ENCODE measurements at regions of chr9 and their contacts with region 1.

Region 1: DNA sequence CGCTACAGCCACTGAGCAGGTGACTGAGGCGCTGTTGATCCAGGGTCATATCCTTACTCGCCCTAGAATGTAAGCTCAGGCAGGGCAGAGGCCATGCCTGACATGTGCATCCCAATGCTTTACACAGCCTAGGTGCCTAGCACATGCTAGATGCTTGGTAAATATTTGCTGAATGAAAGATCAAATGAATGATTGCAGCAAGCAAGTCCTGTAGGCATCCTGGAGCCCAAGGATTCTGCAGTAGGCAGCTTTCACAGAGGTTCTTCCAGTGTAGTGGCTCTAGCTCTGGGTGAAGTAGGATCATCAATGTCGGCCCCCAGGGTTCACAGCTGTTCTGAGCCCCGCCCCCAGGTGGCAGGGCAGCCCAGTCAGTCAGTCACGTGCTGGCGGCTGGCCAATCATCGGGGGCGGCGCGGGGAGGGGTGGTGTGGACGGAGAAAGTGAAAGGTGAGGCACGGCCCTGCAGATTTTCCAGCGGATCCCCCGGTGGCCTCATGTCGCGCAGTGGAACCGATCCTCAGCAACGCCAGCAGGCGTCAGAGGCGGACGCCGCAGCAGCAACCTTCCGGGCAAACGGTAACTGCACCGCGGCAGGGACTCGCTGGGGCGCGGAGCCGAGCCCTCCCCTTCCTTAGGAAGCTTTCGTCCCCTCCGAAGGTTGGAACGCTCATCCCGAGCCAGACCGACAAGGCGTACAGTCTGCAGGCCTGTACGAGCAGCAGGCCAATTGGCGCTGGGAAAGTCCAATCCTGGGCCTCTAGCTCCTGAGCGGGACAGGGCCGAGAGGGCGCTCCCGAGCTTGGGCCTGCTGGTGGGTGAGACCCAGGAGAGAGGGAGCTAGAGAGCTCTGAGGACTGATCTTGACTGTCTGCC is at the start of gene GALT:
- DNase-seq: peak; percentile 98
- H3K4me3 Mint-ChIP-seq: peak within 1 kb of the TSS; percentile 87
- H3K27ac Mint-ChIP-seq: peak within 1 kb of the TSS; percentile 88
- H3K4me1 Mint-ChIP-seq: peaks cover 44% of the 10 kb centered on the region
- H3K27me3 Mint-ChIP-seq: no peaks in the 10 kb centered on the region
- total RNA-seq, gene GALT: 114 to 125 TPM

Region 2: GRCh38 chr9:34611829-34612630 is 34.4 kb before region 1 on chr9 and contains the start of gene RPP25L:
- CTCF ChIA-PET with region 1: no interaction called
- POLR2A ChIA-PET with region 1: no interaction called
- DNase-seq: peak; percentile 83
- H3K4me3 Mint-ChIP-seq: peak within 1 kb of the TSS; percentile 92
- H3K27ac Mint-ChIP-seq: peak within 1 kb of the TSS; percentile 96
- H3K4me1 Mint-ChIP-seq: peaks cover 23% of the 10 kb centered on the region
- H3K27me3 Mint-ChIP-seq: no peaks in the 10 kb centered on the region
- total RNA-seq, gene RPP25L: 22.7 to 26.8 TPM

Region 3: GRCh38 chr9:34630402-34631154 is 15.9 kb before region 1 on chr9:
- CTCF ChIA-PET with region 1: interaction called, 17 read pairs
- POLR2A ChIA-PET with region 1: interaction called, 3 read pairs
- DNase-seq: no peak
- H3K4me3 Mint-ChIP-seq: no peak overlapping the region
- H3K27ac Mint-ChIP-seq: no peak overlapping the region
- H3K4me1 Mint-ChIP-seq: peaks cover 26% of the 10 kb centered on the region
- H3K27me3 Mint-ChIP-seq: peaks cover 48% of the 10 kb centered on the region

Region 4: GRCh38 chr9:34659592-34660535 is 13.4 kb after region 1 on chr9:
- CTCF ChIA-PET with region 1: interaction called, 13 read pairs
- POLR2A ChIA-PET with region 1: no interaction called
- DNase-seq: no peak
- H3K4me3 Mint-ChIP-seq: no peak overlapping the region
- H3K27ac Mint-ChIP-seq: no peak overlapping the region
- H3K4me1 Mint-ChIP-seq: peaks cover 37% of the 10 kb centered on the region
- H3K27me3 Mint-ChIP-seq: no peaks in the 10 kb centered on the region

Region 5: GRCh38 chr9:34665381-34666250 is 19.2 kb after region 1 on chr9:
- CTCF ChIA-PET with region 1: interaction called, 11 read pairs
- POLR2A ChIA-PET with region 1: no interaction called
- DNase-seq: peak; percentile 92
- H3K4me3 Mint-ChIP-seq: peak overlapping the region; percentile 89
- H3K27ac Mint-ChIP-seq: peak overlapping the region; percentile 96
- H3K4me1 Mint-ChIP-seq: peaks cover 56% of the 10 kb centered on the region
- H3K27me3 Mint-ChIP-seq: no peaks in the 10 kb centered on the region

Region 6: DNA sequence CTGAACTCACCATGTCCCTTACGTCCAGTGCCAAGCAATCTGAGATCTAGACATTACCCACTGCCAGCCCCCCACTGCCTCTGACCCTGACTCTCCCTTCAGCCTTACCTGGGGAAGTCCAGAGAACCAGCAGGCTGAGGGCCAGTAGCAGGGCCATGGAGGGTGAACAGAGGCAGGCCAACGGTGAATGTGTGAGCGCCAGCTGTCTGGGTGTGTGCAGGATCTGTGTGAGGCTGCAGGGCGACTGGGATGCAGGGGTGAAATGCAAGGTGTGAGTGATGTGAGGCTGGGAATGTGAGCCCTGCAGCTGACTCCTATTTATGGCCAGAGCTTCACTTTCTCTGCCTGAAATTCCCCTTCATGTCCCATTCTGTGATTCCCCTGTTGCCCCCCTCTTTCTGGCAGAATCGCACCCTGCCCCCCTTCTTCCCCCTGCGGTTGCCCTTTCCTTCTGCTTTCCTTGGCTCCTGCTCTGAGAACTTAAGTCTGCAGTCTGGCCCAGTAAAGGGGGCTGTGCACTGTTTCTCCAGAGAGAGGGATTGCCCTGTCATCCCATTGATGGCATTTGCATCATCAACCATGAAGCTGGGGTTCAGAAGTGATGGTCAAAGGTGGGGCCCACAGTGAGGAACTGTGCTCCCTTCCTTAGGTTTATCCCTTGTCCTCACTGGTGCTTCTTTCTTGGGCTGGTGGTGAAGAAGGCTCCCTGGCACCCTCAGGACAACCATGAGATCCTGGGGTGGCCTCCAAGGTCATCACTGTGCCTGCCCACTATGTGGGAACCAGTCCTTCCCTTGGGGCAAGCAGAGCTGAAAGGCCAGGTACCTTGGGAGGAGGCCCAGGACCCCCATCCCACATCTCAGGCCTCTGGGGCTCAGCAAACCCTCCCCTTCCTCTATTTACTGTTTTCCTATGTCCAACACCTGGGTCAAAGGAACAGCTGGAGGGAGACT is 44.8 kb after region 1 on chr9 and contains the start of gene CCL19:
- CTCF ChIA-PET with region 1: no interaction called
- POLR2A ChIA-PET with region 1: no interaction called
- DNase-seq: no peak
- H3K4me3 Mint-ChIP-seq: no peak within 1 kb of the TSS
- H3K27ac Mint-ChIP-seq: no peak within 1 kb of the TSS
- H3K4me1 Mint-ChIP-seq: no peaks in the 10 kb centered on the region
- H3K27me3 Mint-ChIP-seq: no peaks in the 10 kb centered on the region
- total RNA-seq, gene CCL19: not detected

Region 7: GRCh38 chr9:34701769-34702736 is 55.6 kb after region 1 on chr9:
- CTCF ChIA-PET with region 1: no interaction called
- POLR2A ChIA-PET with region 1: no interaction called
- DNase-seq: peak; percentile 78
- H3K4me3 Mint-ChIP-seq: peak overlapping the region; percentile 57
- H3K27ac Mint-ChIP-seq: no peak overlapping the region
- H3K4me1 Mint-ChIP-seq: peaks cover 11% of the 10 kb centered on the region
- H3K27me3 Mint-ChIP-seq: peaks cover 20% of the 10 kb centered on the region

Measured in activated CD4-positive, alpha-beta T cell treated with anti-CD3 and anti-CD28 coated beads, Interleukin-2, amount 10 ng/mL, durations not matched to agents 7 days and 5 days (primary cell).